CD4-positive, alpha-beta T cell (primary cell): ENCODE measurements at regions of chr2 and their contacts with region 1.

Region 1: GRCh38 chr2:10122386-10123280 is at the start of gene RRM2:
- DNase-seq: peak; percentile 75 to 93 (median 84)
- ATAC-seq: peak; percentile 77
- H3K4me3 ChIP-seq: peak within 1 kb of the TSS; percentile 61
- H3K4me3 Mint-ChIP-seq: peak within 1 kb of the TSS; percentile 94
- H3K27ac ChIP-seq: no peak within 1 kb of the TSS
- H3K27ac Mint-ChIP-seq: peak within 1 kb of the TSS; percentile 78
- H3K4me1 ChIP-seq: peaks cover 60% of the 10 kb centered on the region
- H3K4me1 Mint-ChIP-seq: peaks cover 45% of the 10 kb centered on the region
- H3K27me3 ChIP-seq: peaks cover 11 to 13% of the 10 kb centered on the region in 2 experiments
- H3K27me3 Mint-ChIP-seq: peaks cover 19% of the 10 kb centered on the region
- CTCF ChIP-seq: no peak
- total RNA-seq, gene RRM2: 1.4 to 1.6 TPM

Region 2: DNA sequence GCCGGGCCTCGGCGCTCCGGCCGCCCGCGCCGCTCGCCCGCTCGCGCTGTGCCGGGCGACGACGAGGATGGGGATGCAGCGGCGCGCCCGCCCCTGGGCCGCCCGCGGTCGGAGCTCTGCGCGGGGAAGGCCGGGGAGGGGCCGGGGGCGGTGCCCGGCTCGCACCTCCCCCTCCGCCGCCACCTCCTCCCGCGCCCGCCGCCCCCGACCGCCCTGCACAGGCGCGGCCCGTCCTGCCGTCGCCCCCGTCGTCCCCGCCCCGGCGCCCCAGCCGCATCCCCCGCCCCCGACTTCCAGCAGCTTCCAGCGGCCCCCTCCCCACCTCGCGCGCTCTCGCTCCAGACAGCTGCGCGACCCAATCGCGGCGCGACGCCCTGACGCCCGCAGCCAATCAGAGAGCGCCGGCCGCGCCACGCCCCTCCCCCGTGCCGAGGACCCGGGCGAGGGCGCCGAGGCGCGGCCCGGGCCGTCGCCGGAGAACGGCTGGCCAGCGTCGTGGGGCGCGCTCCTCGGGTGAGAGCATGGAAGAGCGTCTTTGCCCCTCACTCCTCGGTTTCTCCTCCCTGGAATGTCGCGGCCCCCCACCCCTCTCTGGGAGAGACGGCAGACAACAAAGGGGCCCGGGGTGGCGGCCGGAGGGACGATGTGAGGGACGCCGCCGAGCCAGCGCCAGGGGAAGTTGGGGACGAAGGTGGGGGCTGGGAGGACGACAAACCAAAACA is 1118.9 kb before region 1 on chr2 and contains the start of gene MBOAT2:
- CTCF ChIA-PET with region 1: no interaction called
- POLR2A ChIA-PET with region 1: no interaction called
- intact Hi-C with region 1: loop called in 1 of 2 experiments (anchors 10 kb)
- DNase-seq: peak; percentile 56 to 91 (median 72)
- ATAC-seq: peak; percentile 85
- H3K4me3 ChIP-seq: peak within 1 kb of the TSS; percentile 74
- H3K4me3 Mint-ChIP-seq: peak within 1 kb of the TSS; percentile 91
- H3K27ac ChIP-seq: peak within 1 kb of the TSS in 1 of 2 donors; percentile 35
- H3K27ac Mint-ChIP-seq: peak within 1 kb of the TSS; percentile 82
- H3K4me1 ChIP-seq: peaks cover 15% of the 10 kb centered on the region
- H3K4me1 Mint-ChIP-seq: peaks cover 26% of the 10 kb centered on the region
- H3K27me3 ChIP-seq: no peaks in the 10 kb centered on the region
- H3K27me3 Mint-ChIP-seq: no peaks in the 10 kb centered on the region
- CTCF ChIP-seq: no peak
- total RNA-seq, gene MBOAT2: 1.9 to 2.0 TPM

Region 3: GRCh38 chr2:9356292-9356691 is 766.3 kb before region 1 on chr2:
- CTCF ChIA-PET with region 1: no interaction called
- POLR2A ChIA-PET with region 1: no interaction called
- intact Hi-C with region 1: no loop called
- DNase-seq: no peak
- ATAC-seq: no peak
- H3K4me3 ChIP-seq: no peak overlapping the region
- H3K4me3 Mint-ChIP-seq: no peak overlapping the region
- H3K27ac ChIP-seq: no peak overlapping the region
- H3K27ac Mint-ChIP-seq: no peak overlapping the region
- H3K4me1 ChIP-seq: no peaks in the 10 kb centered on the region
- H3K4me1 Mint-ChIP-seq: no peaks in the 10 kb centered on the region
- H3K27me3 ChIP-seq: peaks cover 0 to 4% of the 10 kb centered on the region in 2 experiments
- H3K27me3 Mint-ChIP-seq: peaks cover 41% of the 10 kb centered on the region
- CTCF ChIP-seq: no peak

Region 4: GRCh38 chr2:10072656-10073480 is 49.8 kb before region 1 on chr2:
- CTCF ChIA-PET with region 1: interaction called, 10 read pairs
- POLR2A ChIA-PET with region 1: no interaction called
- intact Hi-C with region 1: loop called in 1 of 2 experiments (anchors 5 kb)
- DNase-seq: peak; percentile 61 to 91 (median 70)
- ATAC-seq: peak; percentile 98
- H3K4me3 ChIP-seq: no peak overlapping the region
- H3K4me3 Mint-ChIP-seq: no peak overlapping the region
- H3K27ac ChIP-seq: no peak overlapping the region
- H3K27ac Mint-ChIP-seq: no peak overlapping the region
- H3K4me1 ChIP-seq: peaks cover 5% of the 10 kb centered on the region
- H3K4me1 Mint-ChIP-seq: peaks cover 5% of the 10 kb centered on the region
- H3K27me3 ChIP-seq: peaks cover 20 to 36% of the 10 kb centered on the region in 2 experiments
- H3K27me3 Mint-ChIP-seq: peaks cover 47% of the 10 kb centered on the region
- CTCF ChIP-seq: peak; percentile 73

Region 5: GRCh38 chr2:10302479-10303180 is 180.0 kb after region 1 on chr2 and contains the start of gene HPCAL1:
- CTCF ChIA-PET with region 1: interaction called, 4 read pairs
- POLR2A ChIA-PET with region 1: interaction called, 12 read pairs
- intact Hi-C with region 1: loop called (anchors 2 kb)
- DNase-seq: peak; percentile 60 to 91 (median 80)
- ATAC-seq: peak; percentile 62
- H3K4me3 ChIP-seq: peak within 1 kb of the TSS; percentile 92
- H3K4me3 Mint-ChIP-seq: peak within 1 kb of the TSS; percentile 98
- H3K27ac ChIP-seq: peak within 1 kb of the TSS; percentile 42 to 70
- H3K27ac Mint-ChIP-seq: peak within 1 kb of the TSS; percentile 84
- H3K4me1 ChIP-seq: peaks cover 65% of the 10 kb centered on the region
- H3K4me1 Mint-ChIP-seq: peaks cover 76% of the 10 kb centered on the region
- H3K27me3 ChIP-seq: no peaks in the 10 kb centered on the region
- H3K27me3 Mint-ChIP-seq: no peaks in the 10 kb centered on the region
- CTCF ChIP-seq: peak; percentile 76
- total RNA-seq, gene HPCAL1: 24.9 to 27.9 TPM

Region 6: DNA sequence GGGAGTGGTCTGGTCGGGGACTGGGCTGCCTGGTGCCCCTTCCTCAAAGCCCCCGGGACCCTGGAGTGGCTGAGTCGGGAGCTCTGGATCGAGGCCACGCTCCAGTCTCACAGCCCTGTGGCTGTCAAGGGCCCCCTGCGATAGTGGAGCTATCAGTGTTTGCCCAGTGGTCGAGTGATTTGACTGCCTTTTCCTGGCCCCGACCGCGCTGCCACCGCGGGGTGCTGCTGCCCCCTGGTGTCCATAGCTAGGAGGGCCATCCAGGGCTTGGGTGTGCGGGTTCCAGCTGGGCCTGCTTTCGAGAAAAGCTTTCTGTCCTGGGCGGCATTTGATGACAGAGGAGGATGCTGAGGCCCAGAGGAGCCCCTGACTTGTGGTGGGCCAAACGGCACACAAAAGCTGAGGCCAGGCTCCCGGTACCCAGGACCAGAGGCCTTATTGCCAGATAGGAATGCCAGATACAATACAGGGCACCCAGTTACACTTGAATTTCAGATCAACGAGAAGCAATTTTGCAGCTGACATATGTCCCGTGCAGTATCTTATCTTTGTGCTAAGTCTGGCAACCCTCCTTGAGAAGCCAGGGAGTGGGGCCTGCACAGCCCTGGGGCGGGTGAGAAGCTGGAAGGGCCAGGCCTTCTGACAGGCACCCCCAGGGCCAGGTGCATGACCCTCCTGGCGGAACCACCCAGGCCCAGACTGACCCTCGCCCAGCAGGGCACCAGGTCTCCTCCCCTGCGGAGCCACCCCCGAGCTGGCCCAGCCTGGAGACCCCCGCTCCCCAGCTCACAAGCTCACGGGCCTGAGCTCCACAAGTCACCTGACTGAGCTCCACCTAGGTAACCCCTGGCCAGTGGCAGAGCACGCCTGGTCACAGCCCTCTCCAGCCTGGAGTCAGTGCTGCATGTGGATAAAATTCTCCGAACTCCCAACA is 312.5 kb after region 1 on chr2:
- CTCF ChIA-PET with region 1: interaction called, 24 read pairs
- POLR2A ChIA-PET with region 1: interaction called, 10 read pairs
- intact Hi-C with region 1: loop called (anchors 1 kb)
- DNase-seq: peak in 13 of 14 experiments; percentile 50 to 87 (median 65)
- ATAC-seq: peak; percentile 56
- H3K4me3 ChIP-seq: no peak overlapping the region
- H3K4me3 Mint-ChIP-seq: peak overlapping the region; percentile 64
- H3K27ac ChIP-seq: no peak overlapping the region
- H3K27ac Mint-ChIP-seq: no peak overlapping the region
- H3K4me1 ChIP-seq: peaks cover 23% of the 10 kb centered on the region
- H3K4me1 Mint-ChIP-seq: peaks cover 9% of the 10 kb centered on the region
- H3K27me3 ChIP-seq: peaks cover 0 to 6% of the 10 kb centered on the region in 2 experiments
- H3K27me3 Mint-ChIP-seq: no peaks in the 10 kb centered on the region
- CTCF ChIP-seq: peak; percentile 91